AG04450 (cell line): ENCODE measurements at regions of chr12 and their contacts with region 1.

Region 1: GRCh38 chr12:95623585-95624042 is 72.3 kb upstream of the USP44 start:
- DNase-seq: peak; percentile 78
- H3K4me3 ChIP-seq: no peak overlapping the region
- H3K27ac ChIP-seq: no peak overlapping the region
- H3K27me3 ChIP-seq: no peaks in the 10 kb centered on the region
- CTCF ChIP-seq: peak; percentile 74

Region 2: DNA sequence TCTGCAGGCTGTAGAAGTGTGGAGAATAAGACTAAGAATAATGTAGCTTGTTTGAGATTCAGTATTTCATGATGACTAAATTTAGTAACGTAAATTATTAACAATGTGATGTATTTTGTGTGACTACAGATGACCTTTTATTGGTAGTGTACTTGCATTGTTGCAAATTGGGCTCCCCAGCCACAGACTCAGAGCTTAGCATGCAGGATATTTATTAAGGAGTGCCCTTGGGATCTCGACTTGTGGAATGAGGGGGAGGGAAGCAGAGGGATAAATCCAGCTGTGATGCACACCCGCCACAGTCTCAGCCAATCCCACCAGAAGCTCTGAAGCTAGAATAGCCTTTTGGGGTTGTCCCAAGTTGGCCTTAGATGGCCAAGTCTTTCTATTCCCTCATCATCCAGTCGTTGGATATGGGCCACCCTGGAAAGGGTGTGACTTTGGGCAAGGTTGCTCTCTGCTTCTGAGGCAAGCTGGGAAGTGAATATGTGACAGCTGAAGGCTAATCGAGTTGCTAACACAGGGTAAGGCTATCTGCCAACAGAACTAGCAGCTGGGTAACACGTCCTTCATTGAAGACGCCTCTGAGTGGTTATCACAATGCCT is 30.2 kb before region 1 on chr12:
- CTCF ChIA-PET with region 1: interaction called, 13 read pairs
- POLR2A ChIA-PET with region 1: no interaction called
- DNase-seq: no peak
- H3K4me3 ChIP-seq: no peak overlapping the region
- H3K27ac ChIP-seq: no peak overlapping the region
- H3K27me3 ChIP-seq: no peaks in the 10 kb centered on the region
- CTCF ChIP-seq: no peak

Region 3: DNA sequence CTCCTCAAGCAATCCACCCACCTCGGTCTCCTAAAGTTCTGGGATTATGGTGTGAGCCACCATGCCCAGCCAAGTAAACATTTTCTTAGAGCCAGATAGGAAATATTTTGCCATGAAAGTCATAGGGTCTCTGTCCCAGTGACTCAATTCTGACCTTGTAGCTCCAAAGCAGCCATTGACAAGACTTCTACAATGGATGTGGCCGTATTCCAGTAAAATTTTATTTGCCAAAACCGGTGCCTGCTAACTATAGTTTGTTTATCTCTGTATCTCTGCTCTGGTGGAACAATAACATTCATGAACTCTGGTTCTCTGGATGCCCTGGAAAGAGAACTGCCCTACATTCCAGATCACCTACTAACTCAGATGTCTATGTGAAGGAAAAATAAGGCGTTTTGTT is 17.7 kb before region 1 on chr12:
- CTCF ChIA-PET with region 1: interaction called, 12 read pairs
- POLR2A ChIA-PET with region 1: interaction called, 4 read pairs
- DNase-seq: no peak
- H3K4me3 ChIP-seq: no peak overlapping the region
- H3K27ac ChIP-seq: no peak overlapping the region
- H3K27me3 ChIP-seq: no peaks in the 10 kb centered on the region
- CTCF ChIP-seq: no peak